IMR-90 (cell line): ENCODE measurements at regions of chr4 and their contacts with region 1.

Region 1: DNA sequence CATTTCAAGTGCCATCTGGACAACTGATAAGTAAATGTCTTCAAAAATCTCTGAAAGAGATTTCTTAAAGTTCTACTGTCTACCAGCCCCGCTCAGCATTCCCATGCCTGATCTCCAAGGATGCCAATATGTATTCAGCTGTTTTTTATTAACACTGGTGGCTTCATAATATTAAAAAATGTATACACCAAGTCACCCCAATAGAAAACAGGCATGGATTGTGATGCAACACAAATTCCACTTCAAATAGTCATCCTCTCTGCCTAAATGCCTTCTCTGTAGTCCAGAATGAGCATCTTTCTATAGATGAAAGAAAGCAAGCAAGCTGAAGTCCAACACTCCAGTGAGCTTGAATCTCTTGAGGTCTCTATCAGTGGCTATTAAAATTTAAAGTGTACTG is 152.2 kb upstream of the PPARGC1A start:
- DNase-seq: peak; percentile 97
- ATAC-seq: peak; percentile 93
- H3K4me3 ChIP-seq: no peak overlapping the region
- H3K27ac ChIP-seq: peak overlapping the region; percentile 77; the same call in 1 of the 2 replicates
- H3K4me1 ChIP-seq: peaks cover 8% of the 10 kb centered on the region
- H3K27me3 ChIP-seq: no peaks in the 10 kb centered on the region
- CTCF ChIP-seq: no peak
- POLR2A ChIP-seq: no peak
- RAD21 ChIP-seq: no peak

Region 2: DNA sequence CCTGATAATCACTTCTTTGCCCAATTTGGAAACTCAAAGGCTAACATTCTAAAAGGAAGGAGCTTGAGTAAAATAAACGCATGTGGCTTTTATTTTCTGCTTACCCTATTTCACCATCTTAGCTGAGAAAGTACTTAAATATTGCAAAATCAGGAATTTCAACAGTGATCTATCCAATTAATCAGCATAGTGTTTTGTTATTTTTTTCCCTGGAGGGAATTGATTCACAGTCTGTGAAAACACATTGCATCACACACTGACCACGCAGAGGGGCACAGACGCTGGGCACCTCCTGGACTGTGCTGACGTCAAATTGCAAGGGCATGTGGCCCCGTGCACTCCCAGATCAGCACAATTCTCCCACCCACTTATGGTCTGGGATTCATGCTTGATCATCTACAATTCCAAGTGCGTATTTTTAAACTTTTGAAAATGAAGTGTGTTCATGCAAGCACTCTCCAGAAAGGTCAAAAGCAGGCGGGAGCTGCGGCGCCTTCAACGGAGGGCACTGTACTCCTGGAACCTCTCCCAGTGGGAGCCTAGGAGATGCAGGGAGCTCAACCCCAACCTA is 168.3 kb after region 1 on chr4:
- CTCF ChIA-PET with region 1: no interaction called
- POLR2A ChIA-PET with region 1: no interaction called
- dilution Hi-C with region 1: no loop called
- in situ Hi-C with region 1: no loop called
- intact Hi-C with region 1: loop called (anchors 1 kb)
- DNase-seq: peak; percentile 96
- ATAC-seq: peak; percentile 93
- H3K4me3 ChIP-seq: no peak overlapping the region
- H3K27ac ChIP-seq: peak overlapping the region; percentile 81; the same call in 1 of the 2 replicates
- H3K4me1 ChIP-seq: peaks cover 10% of the 10 kb centered on the region
- H3K27me3 ChIP-seq: no peaks in the 10 kb centered on the region
- CTCF ChIP-seq: no peak
- POLR2A ChIP-seq: no peak
- RAD21 ChIP-seq: no peak